ENCODE measurements at regions of chr5 and their contacts with region 1.

Region 1: GRCh38 chr5:14879937-14880589 is 8.5 kb upstream of the ANKH start:
- DNase-seq: no peak
- H3K4me3 ChIP-seq: no peak overlapping the region
- H3K27ac ChIP-seq: no peak overlapping the region
- H3K4me1 ChIP-seq: no peaks in the 10 kb centered on the region
- H3K27me3 ChIP-seq: no peaks in the 10 kb centered on the region
- CTCF ChIP-seq: no peak

Region 2: DNA sequence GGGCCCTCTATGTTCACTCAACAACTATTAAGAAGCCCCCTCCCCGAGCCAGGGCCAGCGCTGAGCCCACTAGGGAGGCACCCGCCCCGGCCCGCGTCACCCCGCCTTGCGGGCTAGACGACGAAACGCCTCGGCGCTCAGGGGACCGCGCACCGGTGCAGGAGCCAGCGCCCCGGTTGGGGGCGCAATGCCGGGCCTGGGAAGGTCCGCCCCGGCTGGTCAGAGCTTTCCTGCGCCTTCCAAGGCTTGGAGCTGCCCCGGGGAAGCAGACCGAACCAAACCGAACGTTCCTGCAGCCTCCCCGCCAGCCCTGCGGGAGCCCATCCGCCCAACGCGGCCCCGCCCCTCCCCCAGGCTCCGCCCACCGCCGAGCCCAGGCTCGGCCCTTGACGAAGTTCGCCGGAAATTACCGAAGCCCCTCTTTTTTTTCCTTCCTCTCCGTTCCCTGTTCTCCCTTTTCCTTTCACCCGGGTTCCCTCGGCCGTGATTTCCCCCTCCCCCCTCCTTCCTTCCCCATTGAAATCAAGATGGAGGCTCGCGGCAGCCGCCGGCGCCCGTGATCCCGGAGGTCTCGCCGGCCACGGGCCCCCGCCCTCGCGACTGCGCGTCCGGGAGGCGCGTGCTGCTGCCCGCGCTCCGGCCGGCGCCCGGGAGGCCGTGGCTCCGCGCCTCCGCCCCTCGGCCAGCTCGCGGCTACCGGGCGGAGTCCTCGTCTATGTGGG is 737.1 kb before region 1 on chr5 and contains the start of gene TRIO:
- intact Hi-C with region 1: no loop called
- DNase-seq: peak; percentile 66 to 94
- H3K4me3 ChIP-seq: peak within 1 kb of the TSS; percentile 92 to 97
- H3K27ac ChIP-seq: peak within 1 kb of the TSS; percentile 93 to 98
- H3K4me1 ChIP-seq: peaks cover 0 to 29% of the 10 kb centered on the region in 2 donors
- H3K27me3 ChIP-seq: no peaks in the 10 kb centered on the region
- CTCF ChIP-seq: peak; percentile 23 to 68 (median 67)
- total RNA-seq, gene TRIO: 262 TPM

Region 3: DNA sequence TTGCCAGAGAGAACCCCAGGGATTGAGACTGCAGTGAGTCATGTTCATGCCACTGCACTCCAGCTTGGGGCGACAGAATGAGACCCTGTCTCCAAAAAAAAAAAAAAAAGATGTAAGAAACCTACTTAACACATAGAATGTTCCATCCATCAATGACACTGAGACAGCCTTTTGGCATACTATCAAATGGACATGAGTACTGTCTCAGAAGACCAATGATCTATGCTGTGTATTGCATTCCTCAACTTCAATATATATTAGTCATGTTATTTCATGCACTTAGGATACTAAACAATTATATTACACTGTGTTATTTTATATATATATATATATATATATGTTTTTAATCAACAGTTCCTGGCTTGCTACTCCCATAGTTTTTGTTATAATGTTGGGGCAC is 48.6 kb after region 1 on chr5:
- intact Hi-C with region 1: no loop called
- DNase-seq: no peak
- H3K4me3 ChIP-seq: no peak overlapping the region
- H3K27ac ChIP-seq: no peak overlapping the region
- H3K4me1 ChIP-seq: no peaks in the 10 kb centered on the region
- H3K27me3 ChIP-seq: no peaks in the 10 kb centered on the region
- CTCF ChIP-seq: no peak

Region 4: GRCh38 chr5:14946815-14947640 is 67.0 kb after region 1 on chr5:
- intact Hi-C with region 1: loop called (anchors 5 kb)
- DNase-seq: no peak
- H3K4me3 ChIP-seq: no peak overlapping the region
- H3K27ac ChIP-seq: no peak overlapping the region
- H3K4me1 ChIP-seq: no peaks in the 10 kb centered on the region
- H3K27me3 ChIP-seq: no peaks in the 10 kb centered on the region
- CTCF ChIP-seq: peak; percentile 3 to 37 (median 31)

Measured in ascending aorta (tissue), 2 donors.